Activated CD4-positive, alpha-beta T cell treated with anti-CD3 and anti-CD28 coated beads for 36 hours (primary cell): ENCODE measurements at regions of chr5 and their contacts with region 1.

Region 1: DNA sequence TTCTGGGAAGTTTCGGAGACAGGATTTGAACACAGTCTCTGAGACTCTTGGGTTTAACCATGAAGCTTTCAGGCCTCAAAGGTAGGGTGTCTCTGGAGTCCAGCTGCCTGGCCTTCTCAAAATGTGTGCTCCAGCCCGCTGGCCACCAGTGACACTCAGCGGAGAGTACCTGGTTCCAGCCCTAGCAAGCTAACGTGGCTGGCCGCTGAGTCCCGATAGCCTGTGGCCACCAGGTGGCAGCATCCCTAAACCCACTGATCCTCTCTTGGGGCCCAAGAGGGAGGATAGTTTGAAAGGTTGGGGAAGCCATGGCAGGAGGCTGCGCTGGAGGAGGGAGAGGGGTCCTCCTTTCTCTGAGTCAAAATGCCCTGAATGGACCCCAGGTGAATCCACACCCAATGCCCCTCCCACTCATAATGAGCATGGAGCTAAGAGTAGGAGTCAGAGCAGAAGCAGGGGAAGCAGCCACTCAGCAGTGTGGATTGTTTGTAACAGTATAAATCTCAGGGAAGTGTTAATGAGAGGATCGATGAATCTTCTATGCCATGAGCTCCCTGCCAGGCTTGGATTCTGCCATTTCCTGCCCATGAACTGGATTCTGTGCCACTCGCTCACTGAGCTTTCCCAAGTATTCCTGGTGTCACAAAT is 5.4 kb upstream of the TIFAB start:
- DNase-seq: peak; percentile 81
- ATAC-seq: peak; percentile 77
- H3K4me3 Mint-ChIP-seq: no peak overlapping the region
- H3K27ac Mint-ChIP-seq: no peak overlapping the region
- H3K4me1 Mint-ChIP-seq: no peaks in the 10 kb centered on the region
- H3K27me3 Mint-ChIP-seq: peaks cover 13% of the 10 kb centered on the region

Region 2: GRCh38 chr5:135376961-135377624 is 80.5 kb before region 1 on chr5:
- CTCF ChIA-PET with region 1: no interaction called
- POLR2A ChIA-PET with region 1: no interaction called
- intact Hi-C with region 1: no loop called
- DNase-seq: peak; percentile 76
- ATAC-seq: peak; percentile 93
- H3K4me3 Mint-ChIP-seq: no peak overlapping the region
- H3K27ac Mint-ChIP-seq: peak overlapping the region; percentile 22
- H3K4me1 Mint-ChIP-seq: peaks cover 73% of the 10 kb centered on the region
- H3K27me3 Mint-ChIP-seq: no peaks in the 10 kb centered on the region

Region 3: GRCh38 chr5:135426102-135427082 is 31.2 kb before region 1 on chr5:
- CTCF ChIA-PET with region 1: interaction called, 10 read pairs
- POLR2A ChIA-PET with region 1: no interaction called
- intact Hi-C with region 1: no loop called
- DNase-seq: peak; percentile 31
- ATAC-seq: peak; percentile 86
- H3K4me3 Mint-ChIP-seq: no peak overlapping the region
- H3K27ac Mint-ChIP-seq: no peak overlapping the region
- H3K4me1 Mint-ChIP-seq: peaks cover 4% of the 10 kb centered on the region
- H3K27me3 Mint-ChIP-seq: peaks cover 3% of the 10 kb centered on the region

Region 4: GRCh38 chr5:135437796-135438560 is 19.6 kb before region 1 on chr5:
- CTCF ChIA-PET with region 1: interaction called, 18 read pairs
- POLR2A ChIA-PET with region 1: no interaction called
- intact Hi-C with region 1: no loop called
- DNase-seq: no peak
- ATAC-seq: no peak
- H3K4me3 Mint-ChIP-seq: no peak overlapping the region
- H3K27ac Mint-ChIP-seq: no peak overlapping the region
- H3K4me1 Mint-ChIP-seq: no peaks in the 10 kb centered on the region
- H3K27me3 Mint-ChIP-seq: peaks cover 5% of the 10 kb centered on the region

Region 5: DNA sequence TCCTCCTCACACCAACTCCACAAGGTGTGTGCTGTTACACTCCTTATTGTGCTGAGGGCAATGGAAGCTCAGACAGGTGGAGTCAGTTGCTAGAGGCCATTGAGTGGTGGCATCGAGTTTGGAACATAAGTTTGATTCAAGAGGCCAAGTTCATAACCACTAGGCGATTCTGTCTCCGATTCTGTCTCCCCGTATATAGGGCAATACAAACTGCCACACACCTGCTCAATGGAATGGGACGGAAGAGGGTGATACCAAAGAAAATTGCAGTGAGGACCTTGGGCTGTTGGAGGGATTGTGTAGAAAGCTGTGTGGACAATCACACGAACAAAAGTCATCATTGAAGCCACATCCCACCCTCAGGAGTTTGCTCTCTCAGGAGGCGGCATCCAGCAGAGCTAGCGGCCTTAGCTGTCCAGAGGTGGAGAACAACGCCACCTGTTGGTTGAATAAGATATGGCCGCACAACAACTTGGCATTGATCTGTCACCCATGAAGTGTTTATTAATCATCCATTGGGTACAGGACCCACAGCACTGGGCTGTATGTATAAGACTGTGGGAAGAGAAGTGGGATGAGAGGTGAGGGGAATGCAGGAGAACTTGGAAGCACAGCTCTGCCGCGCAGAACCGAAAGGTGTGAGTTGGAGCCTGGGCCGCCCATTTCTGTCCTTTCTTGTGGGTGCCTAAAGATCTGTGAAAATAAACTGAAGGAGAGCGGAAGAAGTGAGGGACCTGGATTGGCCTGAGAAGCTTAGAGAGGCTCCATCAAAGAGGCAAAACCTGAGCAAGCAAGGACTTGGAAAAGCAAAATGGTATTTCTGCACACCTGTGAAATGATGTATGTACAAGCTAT is 94.3 kb after region 1 on chr5:
- CTCF ChIA-PET with region 1: interaction called, 198 read pairs
- POLR2A ChIA-PET with region 1: interaction called, 9 read pairs
- intact Hi-C with region 1: loop called in 1 of 2 experiments (anchors 1 kb)
- DNase-seq: peak; percentile 80
- ATAC-seq: peak; percentile 77
- H3K4me3 Mint-ChIP-seq: no peak overlapping the region
- H3K27ac Mint-ChIP-seq: no peak overlapping the region
- H3K4me1 Mint-ChIP-seq: no peaks in the 10 kb centered on the region
- H3K27me3 Mint-ChIP-seq: peaks cover 43% of the 10 kb centered on the region